ENCODE measurements at regions of chrX and their contacts with region 1.

Region 1: DNA sequence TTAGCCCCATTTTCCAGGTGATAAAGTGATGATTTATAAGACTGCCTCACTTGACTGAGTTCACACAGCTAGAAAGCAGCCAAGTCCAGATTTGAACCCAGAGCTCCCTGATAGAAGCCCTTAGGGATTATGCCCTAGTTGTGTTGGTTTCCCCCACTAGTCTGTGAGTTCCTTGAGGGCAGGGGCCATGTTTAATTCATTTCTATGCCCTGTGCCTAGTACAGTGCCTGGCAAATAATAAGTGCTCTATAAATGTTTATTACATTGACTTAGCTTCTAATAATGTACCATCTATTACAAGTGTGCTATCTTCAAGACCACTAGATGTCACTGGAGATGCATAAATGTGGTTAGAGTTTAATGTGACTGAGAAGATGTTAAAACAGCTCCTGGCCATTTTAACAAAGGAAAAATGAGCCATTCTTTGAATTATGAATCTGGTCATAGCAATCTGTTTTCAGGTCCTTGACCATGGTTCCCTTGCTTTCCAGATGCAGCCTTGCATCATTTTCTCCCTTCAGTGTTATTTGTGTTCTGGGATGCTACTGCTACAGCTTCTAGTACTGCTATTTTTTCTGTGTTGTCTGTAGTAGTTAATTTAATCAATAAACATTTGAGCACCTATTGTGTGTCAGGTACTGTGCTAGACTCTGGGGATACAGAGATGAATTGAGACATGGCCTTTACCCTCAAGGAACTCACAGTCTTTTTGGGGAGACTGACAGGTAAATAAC is 43.2 kb downstream of the SLC9A6 start:
- DNase-seq: peak in 3 of 14 experiments; percentile 60 to 69 (median 68)
- ATAC-seq: peak; percentile 55
- H3K4me3 ChIP-seq: no peak overlapping the region
- H3K4me3 Mint-ChIP-seq: no peak overlapping the region
- H3K27ac ChIP-seq: no peak overlapping the region
- H3K27ac Mint-ChIP-seq: no peak overlapping the region
- H3K4me1 ChIP-seq: no peaks in the 10 kb centered on the region
- H3K4me1 Mint-ChIP-seq: no peaks in the 10 kb centered on the region
- H3K27me3 ChIP-seq: no peaks in the 10 kb centered on the region
- H3K27me3 Mint-ChIP-seq: no peaks in the 10 kb centered on the region
- CTCF ChIP-seq: peak; percentile 55

Region 2: DNA sequence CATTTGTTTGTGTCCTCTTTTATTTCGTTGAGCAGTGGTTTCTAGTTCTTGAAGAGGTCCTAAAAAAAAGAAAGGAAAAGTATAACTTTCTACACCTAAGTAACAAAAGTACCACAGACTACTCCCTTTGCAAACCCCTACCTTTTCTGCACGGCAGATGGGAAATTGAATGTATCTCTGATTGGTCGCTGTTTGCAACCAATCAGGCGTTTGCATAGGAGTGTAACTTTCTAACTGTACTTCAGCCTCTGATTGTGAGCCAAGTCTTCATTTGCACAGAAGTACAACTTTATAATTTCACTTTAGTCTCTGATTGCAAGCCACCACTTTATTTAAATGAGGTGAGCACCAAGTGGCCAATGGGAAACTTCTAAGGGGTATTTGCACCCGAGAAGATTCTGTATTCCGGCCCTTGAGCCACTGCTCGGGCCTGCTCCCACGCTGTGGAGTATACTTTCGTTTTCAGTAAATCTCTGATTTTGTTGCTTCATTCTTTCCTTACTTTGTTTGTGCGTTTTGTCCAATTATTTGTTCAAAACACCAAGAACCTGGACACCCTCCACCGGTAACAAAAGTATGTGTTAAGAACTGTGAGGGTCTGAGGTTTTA is 78.6 kb after region 1 on chrX:
- CTCF ChIA-PET with region 1: no interaction called
- POLR2A ChIA-PET with region 1: no interaction called
- intact Hi-C with region 1: loop called in 1 of 2 experiments (anchors 10 kb)
- DNase-seq: no peak
- ATAC-seq: no peak
- H3K4me3 ChIP-seq: no peak overlapping the region
- H3K4me3 Mint-ChIP-seq: no peak overlapping the region
- H3K27ac ChIP-seq: no peak overlapping the region
- H3K27ac Mint-ChIP-seq: no peak overlapping the region
- H3K4me1 ChIP-seq: no peaks in the 10 kb centered on the region
- H3K4me1 Mint-ChIP-seq: no peaks in the 10 kb centered on the region
- H3K27me3 ChIP-seq: no peaks in the 10 kb centered on the region
- H3K27me3 Mint-ChIP-seq: no peaks in the 10 kb centered on the region
- CTCF ChIP-seq: no peak

Region 3: GRCh38 chrX:136162831-136163570 is 134.6 kb after region 1 on chrX:
- CTCF ChIA-PET with region 1: interaction called, 13 read pairs
- POLR2A ChIA-PET with region 1: interaction called, 6 read pairs
- intact Hi-C with region 1: loop called (anchors 1 kb)
- DNase-seq: peak; percentile 9 to 63 (median 34)
- ATAC-seq: peak; percentile 77
- H3K4me3 ChIP-seq: no peak overlapping the region
- H3K4me3 Mint-ChIP-seq: no peak overlapping the region
- H3K27ac ChIP-seq: no peak overlapping the region
- H3K27ac Mint-ChIP-seq: no peak overlapping the region
- H3K4me1 ChIP-seq: no peaks in the 10 kb centered on the region
- H3K4me1 Mint-ChIP-seq: peaks cover 16% of the 10 kb centered on the region
- H3K27me3 ChIP-seq: no peaks in the 10 kb centered on the region
- H3K27me3 Mint-ChIP-seq: no peaks in the 10 kb centered on the region
- CTCF ChIP-seq: peak; percentile 55

Region 4: DNA sequence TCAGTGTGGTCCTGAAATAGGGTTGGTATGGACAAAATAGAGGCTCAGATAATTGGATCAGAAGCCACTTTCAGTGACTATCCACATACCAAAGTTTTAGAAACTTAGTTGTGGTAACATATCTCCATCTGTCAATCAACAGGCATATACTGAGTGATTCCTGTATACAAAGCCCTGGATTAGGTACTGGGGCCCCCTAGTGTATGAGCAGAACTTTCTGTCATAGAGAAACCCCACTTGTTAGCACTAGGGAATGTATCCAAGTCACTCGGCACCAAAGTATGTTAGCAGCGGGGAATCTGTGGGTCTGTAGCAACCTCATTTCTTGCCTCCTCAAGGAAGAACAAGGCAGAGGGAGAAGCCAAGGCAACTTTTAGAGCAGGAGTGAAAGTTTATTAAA is 172.0 kb after region 1 on chrX:
- CTCF ChIA-PET with region 1: interaction called, 8 read pairs
- POLR2A ChIA-PET with region 1: interaction called, 3 read pairs
- intact Hi-C with region 1: loop called in 1 of 2 experiments (anchors 5 kb)
- DNase-seq: peak in 3 of 14 experiments; percentile 31 to 40 (median 39)
- ATAC-seq: no peak
- H3K4me3 ChIP-seq: no peak overlapping the region
- H3K4me3 Mint-ChIP-seq: no peak overlapping the region
- H3K27ac ChIP-seq: no peak overlapping the region
- H3K27ac Mint-ChIP-seq: no peak overlapping the region
- H3K4me1 ChIP-seq: peaks cover 24% of the 10 kb centered on the region
- H3K4me1 Mint-ChIP-seq: peaks cover 43% of the 10 kb centered on the region
- H3K27me3 ChIP-seq: no peaks in the 10 kb centered on the region
- H3K27me3 Mint-ChIP-seq: no peaks in the 10 kb centered on the region
- CTCF ChIP-seq: peak; percentile 21

Region 5: GRCh38 chrX:136209016-136209738 is 180.8 kb after region 1 on chrX:
- CTCF ChIA-PET with region 1: interaction called, 12 read pairs
- POLR2A ChIA-PET with region 1: no interaction called
- intact Hi-C with region 1: loop called (anchors 1 to 5 kb)
- DNase-seq: peak in 13 of 14 experiments; percentile 6 to 73 (median 31)
- ATAC-seq: peak; percentile 62
- H3K4me3 ChIP-seq: no peak overlapping the region
- H3K4me3 Mint-ChIP-seq: no peak overlapping the region
- H3K27ac ChIP-seq: no peak overlapping the region
- H3K27ac Mint-ChIP-seq: no peak overlapping the region
- H3K4me1 ChIP-seq: peaks cover 32% of the 10 kb centered on the region
- H3K4me1 Mint-ChIP-seq: peaks cover 19% of the 10 kb centered on the region
- H3K27me3 ChIP-seq: no peaks in the 10 kb centered on the region
- H3K27me3 Mint-ChIP-seq: no peaks in the 10 kb centered on the region
- CTCF ChIP-seq: no peak

Region 6: DNA sequence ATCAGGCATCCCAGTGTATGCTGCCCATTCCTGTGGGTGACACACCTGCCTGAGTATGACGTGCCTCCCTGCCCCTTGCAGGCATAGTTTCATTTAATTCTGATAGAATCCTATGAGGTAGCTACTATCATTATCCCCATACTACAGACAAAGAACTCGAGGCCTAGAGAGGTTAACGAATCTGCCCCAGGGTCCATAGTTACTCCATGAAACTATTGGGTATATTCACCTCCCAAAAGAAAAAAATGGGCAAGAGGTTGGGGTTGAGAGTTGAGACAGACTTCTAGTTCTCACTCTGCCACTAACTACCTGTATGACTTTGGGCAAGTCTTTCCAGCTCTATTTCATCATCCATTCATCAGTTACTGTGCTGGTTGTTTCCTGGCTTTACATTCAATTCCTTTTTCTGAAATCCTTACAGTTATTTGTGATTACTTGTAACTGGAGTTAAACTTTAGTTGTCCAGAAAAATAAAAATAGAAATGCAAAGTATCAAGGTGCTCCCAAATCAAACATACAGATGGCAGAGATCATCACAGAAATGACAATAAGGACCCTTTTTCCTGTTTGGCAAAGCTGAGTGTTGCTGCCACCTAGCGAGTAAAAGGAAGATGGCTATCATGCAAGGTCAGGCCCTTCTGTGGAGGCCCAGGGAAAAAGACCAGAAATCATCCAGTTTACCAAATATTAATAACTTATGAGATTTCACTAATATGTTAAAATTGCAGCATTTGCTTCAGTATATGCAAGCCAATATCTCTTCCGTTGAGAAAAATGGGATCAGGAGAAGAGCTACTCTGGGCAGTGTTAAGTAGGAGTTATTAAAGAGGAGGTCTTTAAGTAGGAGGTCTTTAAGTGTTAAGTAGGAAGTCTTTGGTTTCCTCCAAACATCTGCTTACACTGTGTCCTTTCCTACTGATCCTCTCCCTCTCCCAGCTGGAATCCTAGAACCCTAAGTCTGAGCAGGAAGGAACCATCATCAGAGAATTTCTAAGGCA is 239.9 kb after region 1 on chrX:
- CTCF ChIA-PET with region 1: interaction called, 14 read pairs
- POLR2A ChIA-PET with region 1: no interaction called
- intact Hi-C with region 1: loop called (anchors 1 to 2 kb)
- DNase-seq: peak; percentile 9 to 69 (median 30)
- ATAC-seq: peak; percentile 60
- H3K4me3 ChIP-seq: no peak overlapping the region
- H3K4me3 Mint-ChIP-seq: no peak overlapping the region
- H3K27ac ChIP-seq: no peak overlapping the region
- H3K27ac Mint-ChIP-seq: no peak overlapping the region
- H3K4me1 ChIP-seq: no peaks in the 10 kb centered on the region
- H3K4me1 Mint-ChIP-seq: no peaks in the 10 kb centered on the region
- H3K27me3 ChIP-seq: no peaks in the 10 kb centered on the region
- H3K27me3 Mint-ChIP-seq: no peaks in the 10 kb centered on the region
- CTCF ChIP-seq: peak; percentile 64

Region 7: GRCh38 chrX:136417806-136418205 is 389.4 kb after region 1 on chrX:
- CTCF ChIA-PET with region 1: no interaction called
- POLR2A ChIA-PET with region 1: no interaction called
- intact Hi-C with region 1: no loop called
- DNase-seq: no peak
- ATAC-seq: no peak
- H3K4me3 ChIP-seq: no peak overlapping the region
- H3K4me3 Mint-ChIP-seq: no peak overlapping the region
- H3K27ac ChIP-seq: no peak overlapping the region
- H3K27ac Mint-ChIP-seq: no peak overlapping the region
- H3K4me1 ChIP-seq: no peaks in the 10 kb centered on the region
- H3K4me1 Mint-ChIP-seq: no peaks in the 10 kb centered on the region
- H3K27me3 ChIP-seq: no peaks in the 10 kb centered on the region
- H3K27me3 Mint-ChIP-seq: peaks cover 3% of the 10 kb centered on the region
- CTCF ChIP-seq: no peak